ENCODE measurements at regions of chr13 and their contacts with region 1.

Region 1: DNA sequence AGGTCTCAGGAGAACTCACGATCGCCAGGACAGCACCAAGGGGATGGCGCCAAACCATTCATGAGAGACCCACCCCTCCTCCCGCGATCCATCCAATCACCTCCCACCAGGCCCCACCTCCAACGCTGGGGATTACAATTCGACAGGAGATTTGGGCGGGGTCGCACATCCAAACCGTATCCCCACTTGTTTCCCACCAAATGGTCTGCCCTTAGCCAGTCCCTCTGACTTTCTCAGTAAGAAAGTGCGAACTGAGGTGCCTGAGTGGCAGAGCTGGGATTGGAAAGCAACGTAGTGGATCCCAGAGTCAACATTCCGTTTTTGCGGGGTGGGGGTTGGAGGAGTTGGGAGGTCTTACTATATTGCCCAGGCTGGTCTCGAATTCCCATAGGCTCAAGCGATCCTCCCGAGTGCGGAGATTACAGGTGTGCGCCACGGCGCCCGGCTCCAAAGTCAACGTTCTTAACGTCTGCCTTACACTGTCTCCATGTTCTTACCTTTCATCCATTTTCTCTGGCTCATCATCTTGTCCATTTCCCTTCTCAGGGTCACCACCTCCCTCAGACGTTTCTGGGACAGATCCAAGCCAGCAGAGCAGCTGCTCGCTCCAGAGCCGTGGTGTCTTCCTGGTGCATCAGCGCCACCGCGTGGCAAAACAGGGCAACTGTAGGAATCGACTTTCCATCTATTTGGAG is 102.7 kb upstream of the ABCC4 start:
- DNase-seq: peak; percentile 83
- H3K4me3 Mint-ChIP-seq: peak overlapping the region; percentile 78
- H3K27ac Mint-ChIP-seq: no peak overlapping the region
- H3K4me1 Mint-ChIP-seq: peaks cover 12% of the 10 kb centered on the region
- H3K27me3 Mint-ChIP-seq: peaks cover 14% of the 10 kb centered on the region

Region 2: GRCh38 chr13:95301183-95301967 is 102.6 kb before region 1 on chr13 and contains the start of gene ABCC4:
- CTCF ChIA-PET with region 1: interaction called, 26 read pairs
- DNase-seq: peak; percentile 66
- H3K4me3 Mint-ChIP-seq: peak within 1 kb of the TSS; percentile 77
- H3K27ac Mint-ChIP-seq: no peak within 1 kb of the TSS
- H3K4me1 Mint-ChIP-seq: peaks cover 21% of the 10 kb centered on the region
- H3K27me3 Mint-ChIP-seq: peaks cover 19% of the 10 kb centered on the region

Region 3: GRCh38 chr13:95378603-95379002 is 25.4 kb before region 1 on chr13:
- CTCF ChIA-PET with region 1: interaction called, 19 read pairs
- DNase-seq: no peak
- H3K4me3 Mint-ChIP-seq: no peak overlapping the region
- H3K27ac Mint-ChIP-seq: no peak overlapping the region
- H3K4me1 Mint-ChIP-seq: peaks cover 6% of the 10 kb centered on the region
- H3K27me3 Mint-ChIP-seq: peaks cover 6% of the 10 kb centered on the region

Region 4: DNA sequence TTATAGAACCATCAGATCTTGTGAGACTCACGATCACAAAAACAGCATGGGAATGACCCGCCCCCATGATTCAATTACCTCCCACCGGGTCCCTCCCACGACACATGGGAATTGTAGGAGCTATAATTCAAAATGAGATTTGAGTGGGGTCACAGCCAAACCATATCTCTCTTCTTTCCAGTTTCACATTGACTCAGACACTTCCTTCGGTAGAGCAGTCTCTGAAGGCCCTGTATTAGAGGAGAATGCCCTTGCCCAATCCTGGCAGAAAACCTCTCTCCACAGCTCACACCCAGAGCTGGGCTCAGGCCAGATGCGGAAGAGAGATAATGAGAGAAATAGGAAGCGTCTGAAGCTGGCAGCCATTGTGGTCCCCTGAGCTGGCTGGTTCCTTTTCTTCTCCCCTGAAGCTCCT is 76.2 kb after region 1 on chr13:
- CTCF ChIA-PET with region 1: interaction called, 23 read pairs
- DNase-seq: no peak
- H3K4me3 Mint-ChIP-seq: no peak overlapping the region
- H3K27ac Mint-ChIP-seq: no peak overlapping the region
- H3K4me1 Mint-ChIP-seq: peaks cover 17% of the 10 kb centered on the region
- H3K27me3 Mint-ChIP-seq: peaks cover 13% of the 10 kb centered on the region

Region 5: DNA sequence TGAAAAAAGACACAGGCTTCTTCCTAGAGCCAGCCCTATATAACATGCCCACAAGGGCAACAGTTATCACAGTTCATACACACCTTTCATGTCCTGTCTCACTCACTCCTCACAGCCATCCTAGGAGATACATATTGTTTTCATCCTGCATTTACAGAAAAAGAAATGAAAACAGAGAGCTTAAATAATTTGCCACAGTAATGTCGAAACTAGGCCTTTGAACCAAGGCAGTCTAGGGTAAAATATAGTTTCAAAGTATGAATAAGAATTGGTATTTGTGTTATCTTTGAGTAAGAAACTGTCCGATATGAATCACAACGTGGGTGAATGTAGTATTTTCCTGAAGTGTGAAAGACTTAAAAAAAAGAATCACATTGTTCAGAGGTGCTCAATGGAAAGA is 175.3 kb after region 1 on chr13:
- CTCF ChIA-PET with region 1: no interaction called
- DNase-seq: no peak
- H3K4me3 Mint-ChIP-seq: no peak overlapping the region
- H3K27ac Mint-ChIP-seq: no peak overlapping the region
- H3K4me1 Mint-ChIP-seq: no peaks in the 10 kb centered on the region
- H3K27me3 Mint-ChIP-seq: peaks cover 3% of the 10 kb centered on the region

Measured in activated naive CD4-positive, alpha-beta T cell treated with anti-CD3 and anti-CD28 coated beads, Interleukin-2, amount 10 ng/mL, durations not matched to agents 7 days and 5 days (primary cell).